Naive thymus-derived CD8-positive, alpha-beta T cell (primary cell): ENCODE measurements at regions of chr14 and their contacts with region 1.

Region 1: GRCh38 chr14:92577321-92577742 is 63.8 kb downstream of the RIN3 start:
- DNase-seq: peak in 5 of 10 donors; percentile 25 to 70 (median 52)
- ATAC-seq: peak; percentile 89
- H3K4me3 Mint-ChIP-seq: peak overlapping the region; percentile 70 to 89 (median 82)
- H3K27ac Mint-ChIP-seq: peak overlapping the region; percentile 92 to 96 (median 94)
- H3K4me1 Mint-ChIP-seq: peaks cover 45 to 92% (median 85%) of the 10 kb centered on the region in 4 donors
- H3K27me3 Mint-ChIP-seq: no peaks in the 10 kb centered on the region

Region 2: DNA sequence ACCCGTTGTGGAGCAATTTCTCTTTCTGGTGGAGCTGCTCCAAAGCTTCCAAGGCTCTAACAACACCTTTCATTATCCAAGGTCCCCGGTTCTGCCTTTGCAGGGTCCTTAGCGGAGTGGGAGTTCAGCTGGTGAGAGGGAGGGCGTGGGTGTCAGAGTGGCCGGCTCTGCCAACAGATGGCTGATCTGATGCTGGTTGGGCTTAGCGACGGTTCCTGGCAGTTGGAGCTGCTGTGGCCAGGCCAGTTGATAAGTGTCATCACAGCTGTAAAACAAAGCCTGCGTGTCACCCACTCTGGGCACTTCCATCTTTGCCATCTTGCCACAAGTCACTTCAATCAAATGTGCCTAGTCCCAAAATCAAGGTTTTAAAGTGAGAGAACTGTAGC is 27.5 kb before region 1 on chr14:
- POLR2A ChIA-PET with region 1: interaction called, 12 read pairs
- DNase-seq: no peak
- ATAC-seq: no peak
- H3K4me3 Mint-ChIP-seq: no peak overlapping the region
- H3K27ac Mint-ChIP-seq: peak overlapping the region in 7 of 10 donors; percentile 18 to 85 (median 66)
- H3K4me1 Mint-ChIP-seq: peaks cover 18 to 68% (median 55%) of the 10 kb centered on the region in 4 donors
- H3K27me3 Mint-ChIP-seq: no peaks in the 10 kb centered on the region

Region 3: DNA sequence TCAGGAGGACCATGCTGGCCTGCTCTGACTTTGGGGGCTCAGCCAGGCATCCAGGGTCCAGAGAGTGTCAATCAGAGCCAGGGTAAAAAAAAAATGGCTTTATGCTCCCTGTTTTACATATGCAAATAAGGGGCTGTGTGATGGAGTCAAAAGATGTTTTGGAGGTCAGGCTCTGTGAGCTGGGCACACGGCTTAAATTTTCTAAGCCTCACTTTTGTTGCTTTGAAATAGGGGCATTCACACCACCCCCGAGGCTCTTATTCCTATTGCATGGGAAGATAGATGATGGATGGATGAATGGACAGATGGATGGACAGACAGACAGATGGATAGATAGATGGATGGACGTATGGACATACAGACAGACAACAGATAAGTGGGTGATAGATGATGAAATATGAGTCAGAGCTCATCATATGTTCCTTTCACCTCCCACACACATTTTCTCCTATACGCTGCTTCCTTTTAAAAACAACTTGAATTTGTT is 21.0 kb before region 1 on chr14:
- POLR2A ChIA-PET with region 1: interaction called, 13 read pairs
- DNase-seq: no peak
- ATAC-seq: peak; percentile 12 to 24
- H3K4me3 Mint-ChIP-seq: peak overlapping the region in 9 of 10 donors; percentile 11 to 78 (median 69)
- H3K27ac Mint-ChIP-seq: peak overlapping the region; percentile 45 to 92 (median 84)
- H3K4me1 Mint-ChIP-seq: peaks cover 32 to 80% (median 77%) of the 10 kb centered on the region in 4 donors
- H3K27me3 Mint-ChIP-seq: no peaks in the 10 kb centered on the region

Region 4: GRCh38 chr14:92563359-92563758 is 14.0 kb before region 1 on chr14:
- POLR2A ChIA-PET with region 1: interaction called, 32 read pairs
- DNase-seq: peak in 1 of 10 donors; percentile 15
- ATAC-seq: peak in 1 of 2 donors; percentile 55
- H3K4me3 Mint-ChIP-seq: no peak overlapping the region
- H3K27ac Mint-ChIP-seq: peak overlapping the region in 6 of 10 donors; percentile 21 to 73 (median 48)
- H3K4me1 Mint-ChIP-seq: peaks cover 8 to 68% (median 63%) of the 10 kb centered on the region in 4 donors
- H3K27me3 Mint-ChIP-seq: no peaks in the 10 kb centered on the region